Psoas muscle (tissue), 8 donors: ENCODE measurements at regions of chr13 and their contacts with region 1.

Region 1: GRCh38 chr13:50123862-50124536 is 108.8 kb downstream of the KCNRG start:
- DNase-seq: peak; percentile 87 to 94
- ATAC-seq: peak; percentile 83 to 91 (median 86)
- H3K4me3 ChIP-seq: peak overlapping the region; percentile 99
- H3K27ac ChIP-seq: peak overlapping the region; percentile 100
- H3K4me1 ChIP-seq: peaks cover 40% of the 10 kb centered on the region
- H3K27me3 ChIP-seq: no peaks in the 10 kb centered on the region
- CTCF ChIP-seq: no peak

Region 2: DNA sequence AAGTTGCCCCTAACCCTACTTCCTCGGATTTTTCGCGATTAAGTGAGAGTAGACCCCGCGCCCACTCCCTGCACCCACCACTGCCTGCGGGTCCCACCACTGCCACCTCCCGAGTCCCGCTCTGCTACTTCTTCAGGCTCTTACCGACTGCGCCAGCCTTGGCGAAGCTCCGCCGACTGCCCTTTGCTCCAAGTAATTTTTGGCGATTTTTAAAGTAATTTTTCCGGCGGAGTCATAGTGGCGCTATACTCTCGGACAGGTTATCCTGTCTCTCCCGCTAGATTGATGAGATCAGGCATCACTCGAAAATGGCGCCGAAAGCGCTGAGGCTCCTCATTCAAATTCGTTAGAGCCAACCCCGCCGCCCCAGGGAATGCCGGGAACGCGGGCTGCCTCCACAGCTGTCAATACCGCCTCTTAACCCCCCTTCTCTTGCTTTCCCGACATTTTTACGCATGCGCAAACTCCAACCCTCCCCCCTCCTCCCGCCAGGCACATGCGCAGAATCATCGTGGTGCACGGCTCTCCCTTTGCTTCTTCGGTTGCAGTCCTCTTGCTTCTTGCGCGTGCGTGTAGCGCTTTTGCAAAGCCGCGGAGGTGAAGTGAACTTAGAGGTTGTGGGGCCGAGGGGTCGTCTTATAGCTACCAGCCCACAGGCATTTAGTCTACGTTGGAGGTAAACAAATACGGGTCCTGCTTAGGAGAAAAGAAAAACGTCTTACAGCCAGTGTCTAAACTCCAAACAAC is 42.1 kb before region 1 on chr13:
- intact Hi-C with region 1: loop called (anchors 2 kb)
- DNase-seq: peak; percentile 98 to 99
- ATAC-seq: peak; percentile 93 to 96 (median 95)
- H3K4me3 ChIP-seq: peak overlapping the region; percentile 77
- H3K27ac ChIP-seq: peak overlapping the region; percentile 87
- H3K4me1 ChIP-seq: peaks cover 44% of the 10 kb centered on the region
- H3K27me3 ChIP-seq: no peaks in the 10 kb centered on the region
- CTCF ChIP-seq: no peak

Region 3: GRCh38 chr13:50421473-50422130 is 297.6 kb after region 1 on chr13:
- intact Hi-C with region 1: loop called in 1 of 2 experiments (anchors 5 kb)
- DNase-seq: no peak
- ATAC-seq: peak in 2 of 4 donors; percentile 35 to 39
- H3K4me3 ChIP-seq: no peak overlapping the region
- H3K27ac ChIP-seq: peak overlapping the region; percentile 87
- H3K4me1 ChIP-seq: peaks cover 67% of the 10 kb centered on the region
- H3K27me3 ChIP-seq: no peaks in the 10 kb centered on the region
- CTCF ChIP-seq: no peak